Activated CD8-positive, alpha-beta T cell treated with anti-CD3 and anti-CD28 coated beads, Interleukin-2, amount 10 ng/mL, durations not matched to agents 7 days and 5 days (primary cell): ENCODE measurements at regions of chr2 and their contacts with region 1.

Region 1: GRCh38 chr2:191637182-191638078 is 40.5 kb upstream of the NABP1 start:
- DNase-seq: peak; percentile 60
- ATAC-seq: peak; percentile 93
- H3K4me3 Mint-ChIP-seq: peak overlapping the region; percentile 69
- H3K27ac Mint-ChIP-seq: peak overlapping the region; percentile 93
- H3K4me1 Mint-ChIP-seq: peaks cover 60% of the 10 kb centered on the region
- H3K27me3 Mint-ChIP-seq: no peaks in the 10 kb centered on the region

Region 2: GRCh38 chr2:191231995-191232394 is 405.4 kb before region 1 on chr2:
- CTCF ChIA-PET with region 1: no interaction called
- POLR2A ChIA-PET with region 1: no interaction called
- DNase-seq: no peak
- ATAC-seq: no peak
- H3K4me3 Mint-ChIP-seq: no peak overlapping the region
- H3K27ac Mint-ChIP-seq: no peak overlapping the region
- H3K4me1 Mint-ChIP-seq: no peaks in the 10 kb centered on the region
- H3K27me3 Mint-ChIP-seq: no peaks in the 10 kb centered on the region

Region 3: DNA sequence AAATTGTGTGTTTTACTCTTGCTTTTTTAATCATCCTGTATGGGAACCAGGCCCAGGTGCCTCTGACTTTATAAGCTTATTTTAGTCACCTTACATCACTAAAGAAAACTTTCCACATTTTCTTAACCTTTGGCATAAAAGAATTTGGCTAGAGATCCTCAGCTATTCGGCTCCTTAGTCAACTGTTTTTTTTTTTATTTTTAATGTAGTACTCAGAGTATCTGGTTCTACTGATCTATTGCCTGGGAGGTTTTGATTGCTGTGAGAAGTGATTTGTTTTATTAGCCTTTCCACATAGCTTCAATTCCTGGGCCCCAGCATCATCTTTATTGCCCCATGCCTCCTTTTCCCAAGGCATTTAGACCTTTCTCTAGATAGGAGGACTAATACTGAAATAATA is 271.2 kb before region 1 on chr2:
- CTCF ChIA-PET with region 1: no interaction called
- POLR2A ChIA-PET with region 1: no interaction called
- DNase-seq: no peak
- ATAC-seq: no peak
- H3K4me3 Mint-ChIP-seq: no peak overlapping the region
- H3K27ac Mint-ChIP-seq: no peak overlapping the region
- H3K4me1 Mint-ChIP-seq: no peaks in the 10 kb centered on the region
- H3K27me3 Mint-ChIP-seq: no peaks in the 10 kb centered on the region

Region 4: GRCh38 chr2:191617575-191617974 is 19.9 kb before region 1 on chr2:
- CTCF ChIA-PET with region 1: interaction called, 6 read pairs
- POLR2A ChIA-PET with region 1: interaction called, 23 read pairs
- DNase-seq: peak; percentile 71
- ATAC-seq: peak; percentile 95
- H3K4me3 Mint-ChIP-seq: peak overlapping the region; percentile 29
- H3K27ac Mint-ChIP-seq: peak overlapping the region; percentile 79
- H3K4me1 Mint-ChIP-seq: peaks cover 39% of the 10 kb centered on the region
- H3K27me3 Mint-ChIP-seq: no peaks in the 10 kb centered on the region

Region 5: GRCh38 chr2:191835539-191836350 is 198.3 kb after region 1 on chr2:
- CTCF ChIA-PET with region 1: no interaction called
- POLR2A ChIA-PET with region 1: no interaction called
- DNase-seq: no peak
- ATAC-seq: no peak
- H3K4me3 Mint-ChIP-seq: no peak overlapping the region
- H3K27ac Mint-ChIP-seq: no peak overlapping the region
- H3K4me1 Mint-ChIP-seq: no peaks in the 10 kb centered on the region
- H3K27me3 Mint-ChIP-seq: peaks cover 29% of the 10 kb centered on the region